PC-9 (cell line): ENCODE measurements at regions of chr2 and their contacts with region 1.

Region 1: DNA sequence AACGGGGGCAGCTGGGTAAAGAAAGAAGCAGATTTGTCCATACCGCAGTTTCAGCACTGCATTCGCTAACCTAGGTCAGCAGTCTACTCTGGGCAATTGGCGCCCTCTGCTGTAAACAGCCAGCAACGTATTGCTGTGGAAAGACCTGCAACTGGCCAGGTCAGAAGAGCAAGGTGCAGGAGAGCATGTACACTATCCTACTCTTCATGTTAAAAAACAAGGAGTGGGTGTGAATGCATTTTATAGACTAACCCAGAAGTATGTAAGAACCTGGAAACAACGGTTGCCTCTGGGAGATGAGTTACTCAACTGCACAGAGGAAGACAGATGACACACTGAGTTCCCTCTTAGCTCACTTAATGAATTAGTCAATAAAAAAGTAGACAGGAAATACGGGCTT is 6.2 kb downstream of the MRPS5 start:
- DNase-seq: peak; percentile 69 to 77
- H3K4me3 ChIP-seq: no peak overlapping the region
- H3K27ac ChIP-seq: no peak overlapping the region
- H3K4me1 ChIP-seq: peaks cover 10% of the 10 kb centered on the region; the same call in 1 of the 2 replicates
- H3K27me3 ChIP-seq: no peaks in the 10 kb centered on the region
- CTCF ChIP-seq: peak; percentile 94

Region 2: DNA sequence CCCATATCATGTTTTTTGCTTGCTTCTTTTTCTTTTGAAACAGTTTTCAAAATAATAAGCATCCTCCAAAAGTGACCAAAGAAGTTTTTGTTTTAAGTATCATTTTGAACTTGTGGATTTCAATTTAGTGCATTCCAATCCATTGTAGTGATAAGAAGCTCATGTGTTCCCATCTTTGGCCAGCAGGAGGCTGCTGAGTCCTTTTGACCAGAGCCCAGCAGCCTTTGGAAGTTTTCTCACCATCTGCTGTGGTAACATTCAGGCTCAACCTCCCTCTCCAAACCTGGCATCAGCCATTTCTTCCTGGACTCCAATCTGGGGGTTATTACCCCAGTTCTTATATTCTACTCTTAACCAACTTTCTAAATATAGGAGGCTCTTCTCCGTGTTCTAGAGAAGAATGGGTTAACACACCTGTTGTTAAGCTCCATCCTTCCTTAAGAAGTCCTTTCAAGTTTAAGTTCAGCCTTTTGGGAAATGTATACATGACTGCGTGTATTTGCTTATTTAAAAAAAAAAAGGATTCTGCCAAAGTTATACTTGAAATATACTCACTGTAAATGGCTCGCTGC is 128.9 kb before region 1 on chr2:
- CTCF ChIA-PET with region 1: interaction called, 10 read pairs
- POLR2A ChIA-PET with region 1: no interaction called
- intact Hi-C with region 1: loop called (anchors 1 kb)
- DNase-seq: peak; percentile 63 to 65
- H3K4me3 ChIP-seq: no peak overlapping the region
- H3K27ac ChIP-seq: no peak overlapping the region
- H3K4me1 ChIP-seq: peaks cover 14% of the 10 kb centered on the region
- H3K27me3 ChIP-seq: no peaks in the 10 kb centered on the region
- CTCF ChIP-seq: peak; percentile 96